Sigmoid colon (tissue), 7 donors: ENCODE measurements at regions of chr13 and their contacts with region 1.

Region 1: GRCh38 chr13:57624565-57625435 is 6.7 kb upstream of the PCDH17 start:
- DNase-seq: no peak
- H3K4me3 ChIP-seq: no peak overlapping the region
- H3K27ac ChIP-seq: no peak overlapping the region
- H3K4me1 ChIP-seq: peaks cover 0 to 9% (median 9%) of the 10 kb centered on the region in 4 donors
- H3K27me3 ChIP-seq: peaks cover 10 to 61% (median 39%) of the 10 kb centered on the region in 3 donors
- CTCF ChIP-seq: peak in 3 of 4 experiments; percentile 30 to 67 (median 36)
- EP300 ChIP-seq: no peak
- POLR2A ChIP-seq: no peak

Region 2: GRCh38 chr13:57857945-57858344 is 233.1 kb after region 1 on chr13:
- intact Hi-C with region 1: loop called (anchors 5 kb)
- DNase-seq: no peak
- H3K4me3 ChIP-seq: no peak overlapping the region
- H3K27ac ChIP-seq: no peak overlapping the region
- H3K4me1 ChIP-seq: no peaks in the 10 kb centered on the region
- H3K27me3 ChIP-seq: no peaks in the 10 kb centered on the region
- CTCF ChIP-seq: no peak
- EP300 ChIP-seq: no peak
- POLR2A ChIP-seq: no peak